Mammary epithelial cell (primary cell): ENCODE measurements at regions of chr3 and their contacts with region 1.

Region 1: DNA sequence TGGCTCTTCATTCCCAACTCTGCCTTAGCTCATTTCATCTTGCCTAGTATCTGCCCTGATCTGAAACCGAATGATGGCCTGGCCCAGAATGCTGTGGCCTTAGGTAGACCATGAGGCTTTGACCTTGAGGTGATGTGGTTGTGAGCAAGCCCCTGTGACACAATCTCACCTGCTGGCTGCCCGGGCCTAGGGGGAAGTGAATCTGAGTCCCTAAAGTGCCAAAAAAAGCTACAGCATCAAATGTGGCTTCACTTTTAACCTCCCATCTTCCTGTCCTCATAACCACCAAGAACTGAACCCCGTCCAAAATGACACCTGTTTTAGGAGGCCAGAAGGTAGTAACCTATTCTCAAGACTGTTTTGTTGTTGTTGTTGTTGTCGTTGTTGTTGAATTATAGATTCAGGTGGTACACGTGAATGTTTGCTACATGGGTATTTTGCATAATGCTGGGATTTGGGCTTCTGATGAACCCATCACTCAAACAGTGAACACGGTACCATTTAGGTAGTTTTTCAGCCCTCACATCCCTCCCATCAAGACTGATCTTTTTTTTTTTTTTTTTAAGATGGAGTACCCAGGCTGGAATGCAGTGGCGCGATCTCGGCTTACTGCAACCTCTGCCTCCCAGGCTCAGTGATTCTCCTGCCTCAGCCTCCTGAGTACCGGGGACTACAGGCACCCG is 54.6 kb downstream of the MCCC1 start:
- DNase-seq: no peak
- H3K4me3 ChIP-seq: no peak overlapping the region
- H3K27ac ChIP-seq: no peak overlapping the region
- H3K4me1 ChIP-seq: no peaks in the 10 kb centered on the region
- H3K27me3 ChIP-seq: no peaks in the 10 kb centered on the region
- CTCF ChIP-seq: no peak

Region 2: GRCh38 chr3:182802413-182803390 is 242.0 kb before region 1 on chr3:
- CTCF ChIA-PET with region 1: no interaction called
- dilution Hi-C with region 1: no loop called
- in situ Hi-C with region 1: no loop called
- intact Hi-C with region 1: no loop called
- DNase-seq: no peak
- H3K4me3 ChIP-seq: no peak overlapping the region
- H3K27ac ChIP-seq: no peak overlapping the region
- H3K4me1 ChIP-seq: peaks cover 9% of the 10 kb centered on the region
- H3K27me3 ChIP-seq: no peaks in the 10 kb centered on the region
- CTCF ChIP-seq: no peak

Region 3: DNA sequence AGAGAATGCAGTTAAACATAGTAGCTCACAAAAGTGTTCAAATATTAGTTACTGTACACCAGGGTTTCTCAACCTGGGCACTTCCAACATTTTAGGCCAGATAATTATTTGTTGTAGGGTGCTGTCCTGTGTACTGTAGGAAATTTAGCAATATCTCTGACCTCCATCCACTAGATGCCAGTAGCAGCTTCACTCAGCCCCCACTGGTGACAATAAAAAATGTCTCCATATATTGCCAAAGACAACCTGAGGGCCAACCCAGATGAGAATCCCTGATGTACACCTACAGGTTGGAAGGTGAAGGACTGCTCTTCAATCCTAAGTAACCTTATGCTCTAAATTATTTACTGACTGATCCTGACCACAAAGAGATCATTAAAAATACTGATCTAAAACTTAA is 96.8 kb before region 1 on chr3:
- CTCF ChIA-PET with region 1: no interaction called
- dilution Hi-C with region 1: loop called (anchors 5 kb)
- in situ Hi-C with region 1: no loop called
- intact Hi-C with region 1: no loop called
- DNase-seq: no peak
- H3K4me3 ChIP-seq: no peak overlapping the region
- H3K27ac ChIP-seq: no peak overlapping the region
- H3K4me1 ChIP-seq: no peaks in the 10 kb centered on the region
- H3K27me3 ChIP-seq: no peaks in the 10 kb centered on the region
- CTCF ChIP-seq: no peak

Region 4: GRCh38 chr3:182967218-182968204 is 77.2 kb before region 1 on chr3:
- CTCF ChIA-PET with region 1: no interaction called
- dilution Hi-C with region 1: no loop called
- in situ Hi-C with region 1: no loop called
- intact Hi-C with region 1: no loop called
- DNase-seq: no peak
- H3K4me3 ChIP-seq: no peak overlapping the region
- H3K27ac ChIP-seq: no peak overlapping the region
- H3K4me1 ChIP-seq: peaks cover 11% of the 10 kb centered on the region
- H3K27me3 ChIP-seq: no peaks in the 10 kb centered on the region
- CTCF ChIP-seq: no peak

Region 5: GRCh38 chr3:183161552-183162336 is 117.1 kb after region 1 on chr3:
- CTCF ChIA-PET with region 1: no interaction called
- dilution Hi-C with region 1: no loop called
- in situ Hi-C with region 1: no loop called
- intact Hi-C with region 1: no loop called
- DNase-seq: no peak
- H3K4me3 ChIP-seq: peak overlapping the region; percentile 66 to 76 (median 75)
- H3K27ac ChIP-seq: no peak overlapping the region
- H3K4me1 ChIP-seq: peaks cover 11% of the 10 kb centered on the region
- H3K27me3 ChIP-seq: no peaks in the 10 kb centered on the region
- CTCF ChIP-seq: no peak